HepG2 (cell line): ENCODE measurements at regions of chr12 and their contacts with region 1.

Region 1: DNA sequence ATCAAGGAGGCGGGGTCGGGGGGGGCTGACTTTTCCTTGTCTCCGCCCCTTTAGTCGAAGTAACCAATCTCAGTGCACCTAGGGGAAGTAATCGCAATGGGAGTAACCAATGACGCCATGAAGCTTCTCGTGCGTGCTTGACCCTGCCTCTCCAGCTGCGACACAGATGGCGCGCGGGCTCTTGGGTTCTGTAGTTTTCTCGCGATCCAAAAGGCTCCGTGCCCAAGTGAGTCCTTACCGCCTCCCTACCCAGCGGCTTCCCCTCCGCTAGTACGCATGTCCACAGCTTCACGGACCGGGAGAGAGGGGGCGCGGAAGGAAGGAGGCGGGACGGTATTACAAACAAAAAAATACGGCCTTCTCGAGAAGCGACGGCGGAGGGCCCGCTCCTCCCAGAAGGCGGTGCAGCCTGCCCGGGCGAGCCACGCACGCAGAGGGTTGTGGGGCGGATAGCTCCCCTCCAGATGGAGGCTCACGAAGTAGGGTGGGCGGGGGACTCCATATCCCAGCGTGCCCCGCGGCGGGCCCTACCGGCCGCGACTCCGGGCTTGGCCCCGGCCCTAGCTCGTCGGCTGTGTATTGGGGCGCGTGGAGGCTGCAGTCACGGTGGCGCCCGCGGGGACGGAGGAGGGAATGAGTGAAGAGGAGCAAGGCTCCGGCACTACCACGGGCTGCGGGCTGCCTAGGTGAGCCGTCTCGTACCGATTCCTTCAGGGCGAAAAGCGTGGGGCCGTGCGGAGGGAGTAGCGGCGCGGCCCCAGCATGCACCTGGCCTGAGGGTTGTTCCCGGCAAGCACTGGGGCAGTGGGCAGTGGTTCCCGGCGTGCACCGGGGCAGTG is at the start of gene TARBP2:
- DNase-seq: peak; percentile 99
- ATAC-seq: peak; percentile 83
- H3K4me3 ChIP-seq: peak within 1 kb of the TSS; percentile 69 to 78 (median 76)
- H3K27ac ChIP-seq: peak within 1 kb of the TSS; percentile 88
- H3K4me1 ChIP-seq: peaks cover 48% of the 10 kb centered on the region
- H3K27me3 ChIP-seq: no peaks in the 10 kb centered on the region; a peak in 1 of 5 replicates
- CTCF ChIP-seq: peak; percentile 11; the same call in 1 of the 2 replicates
- EP300 ChIP-seq: 0 out of 4 replicates have a peak, but pooled peaks of 1 of the 2 experiments have one; percentile 5
- POLR2A ChIP-seq: peak; percentile 78 to 86
- RAD21 ChIP-seq: peak; percentile 38; the same call in 1 of the 2 replicates
- total RNA-seq, gene TARBP2: 39.5 and 55.5 TPM in 2 replicates

Region 2: DNA sequence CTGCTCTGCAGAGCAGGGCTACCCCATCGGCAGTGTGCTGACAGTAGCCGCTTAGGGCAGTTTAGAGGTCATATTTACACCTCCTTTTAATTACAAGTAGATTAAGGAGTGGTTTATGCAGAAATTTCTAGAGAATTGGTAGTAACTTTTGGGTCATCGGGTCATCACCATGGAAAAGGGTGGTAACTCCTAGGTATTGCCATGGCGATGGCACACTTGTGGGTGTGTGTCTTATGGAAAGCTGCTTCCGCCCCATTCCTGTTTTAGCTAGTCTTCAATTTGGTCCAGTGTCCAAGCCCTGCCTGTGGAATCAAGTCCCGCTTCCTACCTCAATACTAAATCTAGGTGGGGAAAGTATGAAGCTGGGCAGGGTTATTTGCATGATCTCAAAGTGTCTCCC is 350.0 kb before region 1 on chr12:
- CTCF ChIA-PET with region 1: no interaction called
- POLR2A ChIA-PET with region 1: no interaction called
- in situ Hi-C with region 1: no loop called
- intact Hi-C with region 1: no loop called
- DNase-seq: no peak
- ATAC-seq: no peak
- H3K4me3 ChIP-seq: no peak overlapping the region
- H3K27ac ChIP-seq: no peak overlapping the region
- H3K4me1 ChIP-seq: peaks cover 1% of the 10 kb centered on the region
- H3K27me3 ChIP-seq: no peaks in the 10 kb centered on the region
- CTCF ChIP-seq: no peak
- EP300 ChIP-seq: no peak
- POLR2A ChIP-seq: no peak
- RAD21 ChIP-seq: no peak

Region 3: DNA sequence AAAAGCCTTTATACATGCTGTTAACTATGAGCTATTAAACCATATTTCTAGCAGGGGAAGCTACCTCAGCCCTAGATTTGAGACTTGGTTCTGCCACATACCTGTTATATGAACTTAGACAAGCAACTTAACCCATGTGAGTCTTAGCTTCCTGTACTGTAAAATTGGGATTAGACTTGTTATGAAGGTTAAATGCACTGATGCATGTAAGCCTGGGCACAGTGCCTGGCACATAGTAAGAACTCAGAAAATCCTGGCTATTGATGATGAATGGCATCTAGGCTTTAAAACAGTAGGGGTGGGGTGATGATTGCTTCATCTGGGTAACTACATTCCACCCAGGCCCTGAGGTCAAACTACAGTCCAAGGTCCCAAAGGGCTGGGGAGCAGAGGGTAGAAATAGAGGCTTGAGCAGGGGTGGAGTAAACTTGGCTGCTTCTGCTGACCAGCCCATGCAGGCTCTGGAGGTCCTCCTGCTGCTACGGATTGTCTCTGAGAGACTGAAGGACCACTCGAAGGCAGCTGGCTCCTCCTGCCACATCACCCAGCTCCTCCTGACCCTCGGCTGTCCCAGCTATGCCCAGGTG is 221.6 kb before region 1 on chr12:
- CTCF ChIA-PET with region 1: no interaction called
- POLR2A ChIA-PET with region 1: no interaction called
- in situ Hi-C with region 1: no loop called
- intact Hi-C with region 1: no loop called
- DNase-seq: peak; percentile 16
- ATAC-seq: peak; percentile 71
- H3K4me3 ChIP-seq: no peak overlapping the region
- H3K27ac ChIP-seq: peak overlapping the region; percentile 49
- H3K4me1 ChIP-seq: peaks cover 15% of the 10 kb centered on the region
- H3K27me3 ChIP-seq: no peaks in the 10 kb centered on the region; a peak in 1 of 5 replicates
- CTCF ChIP-seq: no peak
- EP300 ChIP-seq: no peak; a peak in 1 of 4 replicates
- POLR2A ChIP-seq: 0 out of 4 replicates have a peak, but pooled peaks of 1 of the 2 experiments have one; percentile 21
- RAD21 ChIP-seq: no peak

Region 4: DNA sequence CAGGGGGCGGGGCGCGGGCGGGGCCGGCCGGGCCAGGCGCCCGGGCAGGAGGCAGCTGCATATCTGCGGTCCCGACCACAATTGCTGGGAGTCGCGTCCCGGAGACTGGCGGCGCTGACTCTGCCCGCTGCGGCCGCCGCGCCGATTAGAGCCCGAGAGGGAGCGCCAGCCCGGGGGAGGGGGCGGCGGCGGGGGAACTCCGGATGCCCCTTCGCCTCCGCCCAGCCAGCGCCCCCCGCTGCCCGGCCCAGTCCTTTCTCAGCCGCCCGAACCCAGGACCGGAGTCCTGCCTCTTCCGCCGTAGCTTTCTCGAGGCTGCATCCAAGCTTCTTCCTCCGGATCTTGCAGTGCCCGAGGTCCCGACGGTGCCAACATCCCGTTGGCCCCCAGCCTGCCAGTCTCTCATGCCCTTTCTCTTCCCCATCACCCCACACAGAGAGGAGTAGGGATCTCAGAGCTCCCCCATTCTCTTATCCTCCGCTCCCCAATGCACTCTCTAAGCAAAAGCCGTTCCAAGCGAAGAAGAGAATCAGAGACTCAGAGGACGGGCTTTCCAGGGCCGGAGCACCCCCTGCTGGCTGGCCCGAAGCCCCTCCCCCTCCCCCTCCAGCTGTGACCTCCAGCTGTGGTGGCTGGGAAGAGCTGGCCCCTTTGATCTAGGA is 156.0 kb before region 1 on chr12:
- CTCF ChIA-PET with region 1: no interaction called
- POLR2A ChIA-PET with region 1: interaction called, 10 read pairs
- in situ Hi-C with region 1: no loop called
- intact Hi-C with region 1: loop called (anchors 2 kb)
- DNase-seq: peak; percentile 54
- ATAC-seq: peak; percentile 87
- H3K4me3 ChIP-seq: peak overlapping the region; percentile 79 to 91 (median 82)
- H3K27ac ChIP-seq: no peak overlapping the region
- H3K4me1 ChIP-seq: peaks cover 17% of the 10 kb centered on the region
- H3K27me3 ChIP-seq: peaks cover 1 to 30% of the 10 kb centered on the region in 2 experiments; a peak in 4 of 5 replicates
- CTCF ChIP-seq: peak; percentile 90
- EP300 ChIP-seq: no peak
- POLR2A ChIP-seq: no peak
- RAD21 ChIP-seq: peak; percentile 73

Region 5: GRCh38 chr12:53441040-53441833 is 59.8 kb before region 1 on chr12 and contains the start of gene PRR13:
- CTCF ChIA-PET with region 1: no interaction called
- POLR2A ChIA-PET with region 1: interaction called, 25 read pairs
- in situ Hi-C with region 1: no loop called
- intact Hi-C with region 1: no loop called
- DNase-seq: peak; percentile 98
- ATAC-seq: peak; percentile 97
- H3K4me3 ChIP-seq: peak within 1 kb of the TSS; percentile 71 to 78 (median 77)
- H3K27ac ChIP-seq: peak within 1 kb of the TSS; percentile 90
- H3K4me1 ChIP-seq: peaks cover 50% of the 10 kb centered on the region
- H3K27me3 ChIP-seq: no peaks in the 10 kb centered on the region; a peak in 1 of 5 replicates
- CTCF ChIP-seq: no peak
- EP300 ChIP-seq: 0 out of 4 replicates have a peak, but pooled peaks of 1 of the 2 experiments have one; percentile 10
- POLR2A ChIP-seq: peak; percentile 90 to 91
- RAD21 ChIP-seq: 0 out of 2 replicates have a peak, but pooled peaks have one; percentile 8
- total RNA-seq, gene PRR13: 102 and 109 TPM in 2 replicates

Region 6: GRCh38 chr12:53513712-53514410 is 12.9 kb after region 1 on chr12:
- CTCF ChIA-PET with region 1: no interaction called
- POLR2A ChIA-PET with region 1: interaction called, 20 read pairs
- in situ Hi-C with region 1: no loop called
- intact Hi-C with region 1: no loop called
- DNase-seq: no peak
- ATAC-seq: no peak
- H3K4me3 ChIP-seq: no peak overlapping the region
- H3K27ac ChIP-seq: no peak overlapping the region
- H3K4me1 ChIP-seq: no peaks in the 10 kb centered on the region
- H3K27me3 ChIP-seq: no peaks in the 10 kb centered on the region
- CTCF ChIP-seq: no peak
- EP300 ChIP-seq: no peak
- POLR2A ChIP-seq: no peak
- RAD21 ChIP-seq: no peak

Region 7: DNA sequence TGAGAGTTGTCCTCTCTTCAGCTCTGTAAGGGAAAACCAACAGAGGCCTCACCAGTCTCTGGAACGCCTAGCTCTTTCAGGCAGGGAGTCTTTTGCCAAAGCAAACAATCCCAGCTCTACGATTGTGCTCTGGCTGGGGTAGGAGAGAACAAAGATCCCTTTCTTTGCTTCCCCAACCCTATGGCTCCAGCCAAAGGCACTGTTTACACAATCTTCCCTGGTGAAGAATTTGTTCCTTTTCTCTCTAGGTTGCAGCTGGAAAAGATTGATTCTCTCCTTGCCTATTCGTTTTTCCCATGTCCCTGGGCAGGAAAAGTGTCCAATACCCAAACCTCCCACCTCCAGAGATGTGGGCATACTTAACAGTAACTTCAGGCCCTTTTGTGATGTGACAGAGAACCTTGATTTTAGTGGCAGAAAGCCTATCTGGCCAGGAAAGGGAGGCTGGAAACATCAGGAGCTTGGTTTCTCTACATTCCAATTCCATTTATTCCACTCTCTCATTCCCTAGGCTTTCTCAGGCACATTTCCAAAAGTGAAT is 158.1 kb after region 1 on chr12:
- CTCF ChIA-PET with region 1: no interaction called
- POLR2A ChIA-PET with region 1: interaction called, 12 read pairs
- in situ Hi-C with region 1: no loop called
- intact Hi-C with region 1: no loop called
- DNase-seq: peak; percentile 96
- ATAC-seq: peak; percentile 99
- H3K4me3 ChIP-seq: peak overlapping the region; percentile 48 to 62 (median 58); a peak in 5 of 6 replicates
- H3K27ac ChIP-seq: peak overlapping the region; percentile 96
- H3K4me1 ChIP-seq: peaks cover 45% of the 10 kb centered on the region
- H3K27me3 ChIP-seq: no peaks in the 10 kb centered on the region
- CTCF ChIP-seq: peak; percentile 18; the same call in 1 of the 2 replicates
- EP300 ChIP-seq: peak in 1 of 2 experiments; percentile 67; a peak in 1 of 4 replicates
- POLR2A ChIP-seq: peak in 1 of 2 experiments; percentile 44; a peak in 1 of 4 replicates
- RAD21 ChIP-seq: no peak

Region 8: DNA sequence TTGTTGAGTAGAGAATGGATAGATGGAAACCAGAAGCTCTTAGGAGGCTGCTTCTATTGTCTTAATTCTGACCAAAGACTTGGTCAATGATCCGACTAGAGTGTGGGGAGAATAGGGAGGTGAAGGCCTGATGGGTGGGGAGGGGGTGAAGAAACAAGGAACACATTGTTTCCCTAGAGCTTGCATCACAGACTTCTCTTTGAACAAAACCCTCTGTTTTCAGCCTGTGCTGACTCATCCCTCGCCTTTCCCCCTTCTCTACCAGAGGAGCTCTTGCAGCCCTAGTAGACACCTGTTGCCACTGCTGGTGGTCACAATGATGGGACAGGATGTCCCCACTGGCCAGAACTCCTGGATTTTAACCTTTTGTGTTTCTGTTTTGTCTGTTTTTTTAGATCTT is 297.6 kb after region 1 on chr12:
- CTCF ChIA-PET with region 1: no interaction called
- POLR2A ChIA-PET with region 1: no interaction called
- in situ Hi-C with region 1: no loop called
- intact Hi-C with region 1: no loop called
- DNase-seq: peak; percentile 97
- ATAC-seq: peak; percentile 99
- H3K4me3 ChIP-seq: no peak overlapping the region
- H3K27ac ChIP-seq: peak overlapping the region; percentile 69
- H3K4me1 ChIP-seq: peaks cover 36% of the 10 kb centered on the region
- H3K27me3 ChIP-seq: no peaks in the 10 kb centered on the region
- CTCF ChIP-seq: no peak
- EP300 ChIP-seq: peak; percentile 56 to 89; a peak in 3 of 4 replicates
- POLR2A ChIP-seq: no peak; a peak in 1 of 4 replicates
- RAD21 ChIP-seq: no peak